Dendritic cell treated with granulocyte-macrophage colony-stimulating factor and Interleukin-4, amounts not matched to agents 40 ng/mL and 50 ng/mL, for 4 days (primary cell): ENCODE measurements at regions of chr3 and their contacts with region 1.

Region 1: DNA sequence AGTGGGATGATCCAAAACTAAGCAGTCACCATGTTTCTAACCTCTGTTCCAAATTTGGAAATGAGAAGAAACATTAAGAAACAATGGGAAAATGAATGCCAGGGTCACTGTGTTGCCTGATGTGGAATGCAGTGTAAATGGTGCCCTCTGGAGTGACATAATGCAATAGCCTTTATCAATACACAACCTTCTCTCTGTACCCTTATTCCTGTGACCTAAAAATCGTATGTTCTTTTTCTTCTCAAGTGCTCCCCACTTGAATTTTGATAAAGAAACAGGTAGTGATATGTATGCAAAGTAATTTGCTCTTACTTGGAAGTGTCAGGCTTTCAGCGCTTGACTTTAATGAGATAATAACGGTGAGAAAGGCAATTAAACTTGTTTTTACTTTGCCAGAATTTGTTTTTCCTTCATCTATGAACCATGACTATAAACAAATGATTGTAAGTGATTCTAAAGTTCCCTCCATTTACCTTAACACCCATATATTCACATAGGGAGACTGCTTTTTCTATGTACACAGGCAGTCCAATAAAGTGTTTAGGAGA is 145.8 kb upstream of the THRB start:
- H3K4me3 Mint-ChIP-seq: no peak overlapping the region
- H3K27ac Mint-ChIP-seq: no peak overlapping the region
- H3K4me1 Mint-ChIP-seq: no peaks in the 10 kb centered on the region
- H3K27me3 Mint-ChIP-seq: no peaks in the 10 kb centered on the region

Region 2: DNA sequence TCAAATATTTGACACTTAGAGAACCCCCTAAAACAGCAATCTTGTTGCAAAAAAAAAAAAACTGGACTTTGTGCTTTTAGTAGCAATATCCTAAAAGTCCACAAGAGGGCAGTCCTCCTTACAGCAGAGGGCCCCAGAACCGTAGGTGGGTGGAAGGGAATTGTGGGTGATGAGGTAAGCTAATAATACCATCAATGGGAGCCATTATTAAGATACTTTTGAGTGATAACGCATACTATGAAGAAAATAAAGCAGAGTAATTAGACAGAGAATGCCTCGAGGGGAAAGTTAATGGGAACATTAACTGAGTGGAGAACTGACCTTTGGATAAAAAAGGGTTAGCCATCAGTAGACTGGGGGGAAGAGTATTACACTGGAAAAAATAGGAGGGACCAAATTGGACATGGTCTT is 375.7 kb before region 1 on chr3:
- intact Hi-C with region 1: loop called (anchors 2 kb)
- H3K4me3 Mint-ChIP-seq: no peak overlapping the region
- H3K27ac Mint-ChIP-seq: no peak overlapping the region
- H3K4me1 Mint-ChIP-seq: no peaks in the 10 kb centered on the region
- H3K27me3 Mint-ChIP-seq: peaks cover 4% of the 10 kb centered on the region

Region 3: GRCh38 chr3:24573576-24573975 is 66.8 kb before region 1 on chr3:
- intact Hi-C with region 1: no loop called
- H3K4me3 Mint-ChIP-seq: no peak overlapping the region
- H3K27ac Mint-ChIP-seq: no peak overlapping the region
- H3K4me1 Mint-ChIP-seq: no peaks in the 10 kb centered on the region
- H3K27me3 Mint-ChIP-seq: no peaks in the 10 kb centered on the region

Region 4: GRCh38 chr3:24907106-24907505 is 266.7 kb after region 1 on chr3:
- intact Hi-C with region 1: no loop called
- H3K4me3 Mint-ChIP-seq: no peak overlapping the region
- H3K27ac Mint-ChIP-seq: no peak overlapping the region
- H3K4me1 Mint-ChIP-seq: no peaks in the 10 kb centered on the region
- H3K27me3 Mint-ChIP-seq: no peaks in the 10 kb centered on the region